ENCODE measurements at regions of chr7 and their contacts with region 1.

Region 1: DNA sequence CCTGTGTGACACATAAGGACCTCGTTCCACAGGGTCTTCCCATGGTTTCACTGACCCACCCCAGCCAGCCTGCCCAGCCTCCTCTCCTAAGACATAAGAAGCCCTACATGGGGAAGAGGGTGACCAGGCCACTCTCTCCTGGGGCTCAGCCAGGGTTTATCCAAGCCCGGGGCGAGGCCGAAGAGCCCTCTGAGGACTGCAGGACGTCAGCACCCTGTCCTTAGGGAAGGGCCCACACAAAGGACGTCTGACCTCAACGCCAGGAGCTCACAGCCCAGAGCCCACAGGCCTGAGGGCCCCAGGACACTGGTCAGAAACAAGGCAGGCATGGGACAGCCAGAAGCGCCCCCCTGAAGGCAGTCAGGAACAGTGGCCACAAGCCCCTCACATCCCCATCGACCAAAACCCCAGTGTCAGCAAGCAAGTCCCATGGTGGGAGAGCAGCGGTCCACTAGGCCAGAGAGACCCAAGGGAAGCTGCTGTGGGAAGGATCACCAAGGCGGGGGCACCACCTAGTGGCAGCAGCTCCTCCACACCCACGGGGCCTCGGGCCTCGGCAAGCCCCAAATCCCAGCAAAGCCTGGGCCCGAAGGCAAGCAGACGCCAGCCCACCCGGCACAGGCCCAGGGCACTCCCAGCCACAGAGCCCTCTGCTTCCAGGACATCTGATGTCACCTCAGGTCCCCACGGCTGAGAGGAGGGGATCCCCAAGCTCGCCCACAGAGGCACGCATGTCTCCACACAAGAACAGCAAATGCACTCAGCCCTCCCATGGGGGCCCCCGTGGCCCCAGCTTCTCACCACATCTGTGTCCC is 23.4 kb downstream of the MAD1L1 start:
- DNase-seq: peak; percentile 59 to 75 (median 68)
- ATAC-seq: peak; percentile 71
- H3K4me3 ChIP-seq: no peak overlapping the region
- H3K4me1 ChIP-seq: no peaks in the 10 kb centered on the region
- CTCF ChIP-seq: peak; percentile 31

Region 2: GRCh38 chr7:2104107-2104710 is 105.1 kb before region 1 on chr7:
- intact Hi-C with region 1: loop called in 1 of 2 experiments (anchors 10 kb)
- DNase-seq: peak; percentile 68 to 78 (median 72)
- ATAC-seq: peak; percentile 67
- H3K4me3 ChIP-seq: no peak overlapping the region
- H3K4me1 ChIP-seq: no peaks in the 10 kb centered on the region
- CTCF ChIP-seq: no peak

Region 3: DNA sequence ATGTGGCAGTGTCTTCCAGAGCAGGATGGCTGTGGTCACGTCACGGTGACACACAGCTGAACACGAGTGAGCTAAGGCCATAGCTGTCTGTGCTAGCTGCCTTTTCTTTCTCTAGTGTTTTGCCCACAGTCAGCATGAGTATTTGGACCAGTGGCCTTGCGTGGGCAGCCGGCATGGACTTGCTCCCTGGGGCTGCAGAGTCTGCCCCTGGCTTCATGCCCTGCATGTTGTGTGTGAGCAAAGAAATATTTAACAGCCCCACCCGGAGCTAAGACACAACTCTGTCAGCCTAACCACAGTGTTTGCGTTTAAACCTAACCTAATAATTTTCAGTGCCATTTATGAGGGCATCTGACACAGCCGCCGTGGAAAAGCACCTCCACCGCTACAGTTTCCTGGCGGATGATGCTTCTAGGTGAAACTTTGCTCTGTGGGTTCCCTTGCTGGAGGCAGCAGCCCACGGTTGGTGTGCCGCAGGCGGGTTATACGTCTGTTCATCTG is 208.7 kb after region 1 on chr7:
- intact Hi-C with region 1: no loop called
- DNase-seq: peak in 1 of 3 donors; percentile 19
- ATAC-seq: peak; percentile 36
- H3K4me3 ChIP-seq: no peak overlapping the region
- H3K4me1 ChIP-seq: no peaks in the 10 kb centered on the region
- CTCF ChIP-seq: no peak